Activated T-helper 1 cell treated with anti-CD3 and anti-CD28 coated beads, Interleukin-12 subunit alpha, Interleukin-12 subunit beta, Interleukin-2, Interleukin-4 antibody, amounts not matched to agents 30 ng/mL and 10 ng/mL and 1 ng/mL, durations not matched to agents 14 hours and 24 hours and 36 hours (primary cell): ENCODE measurements at regions of chr7 and their contacts with region 1.

Region 1: GRCh38 chr7:42886129-42886528 is 25.7 kb downstream of the C7orf25 start:
- DNase-seq: no peak
- H3K4me3 Mint-ChIP-seq: no peak overlapping the region
- H3K27ac Mint-ChIP-seq: no peak overlapping the region
- H3K4me1 Mint-ChIP-seq: peaks cover 25% of the 10 kb centered on the region
- H3K27me3 Mint-ChIP-seq: peaks cover 7% of the 10 kb centered on the region

Region 2: DNA sequence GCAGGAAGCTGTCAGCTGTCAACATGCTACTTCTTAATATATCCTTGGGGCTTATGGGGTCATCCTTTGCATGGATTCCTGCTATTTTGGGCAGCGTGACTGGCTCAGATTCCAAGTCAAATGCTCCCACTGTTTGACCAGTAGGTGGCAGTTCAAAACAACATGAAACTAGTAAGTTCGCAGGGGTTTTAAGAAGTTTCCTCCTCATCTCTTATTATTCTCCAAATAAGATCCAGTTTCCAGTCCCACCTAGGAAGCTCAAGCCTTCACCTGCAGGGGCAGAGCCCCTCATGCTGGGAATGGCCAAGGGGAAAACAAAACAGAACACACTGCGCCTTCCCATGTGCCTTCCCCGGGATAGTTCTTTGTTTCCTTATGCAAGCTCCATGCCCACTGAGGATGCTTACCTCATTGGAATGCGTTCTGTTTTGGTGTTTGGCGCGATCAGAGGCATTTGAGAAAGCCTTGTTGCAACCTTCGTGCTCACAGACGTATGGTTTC is 908.9 kb before region 1 on chr7:
- intact Hi-C with region 1: loop called (anchors 5 kb)
- DNase-seq: no peak
- H3K4me3 Mint-ChIP-seq: no peak overlapping the region
- H3K27ac Mint-ChIP-seq: no peak overlapping the region
- H3K4me1 Mint-ChIP-seq: no peaks in the 10 kb centered on the region
- H3K27me3 Mint-ChIP-seq: peaks cover 9% of the 10 kb centered on the region

Region 3: GRCh38 chr7:42014625-42015546 is 871.2 kb before region 1 on chr7:
- intact Hi-C with region 1: loop called (anchors 2 kb)
- DNase-seq: no peak
- H3K4me3 Mint-ChIP-seq: no peak overlapping the region
- H3K27ac Mint-ChIP-seq: no peak overlapping the region
- H3K4me1 Mint-ChIP-seq: no peaks in the 10 kb centered on the region
- H3K27me3 Mint-ChIP-seq: peaks cover 2% of the 10 kb centered on the region

Region 4: GRCh38 chr7:42911454-42912447 is 25.6 kb after region 1 on chr7 and contains the start of gene C7orf25:
- intact Hi-C with region 1: loop called (anchors 1 kb)
- DNase-seq: peak; percentile 93
- H3K4me3 Mint-ChIP-seq: peak within 1 kb of the TSS; percentile 90
- H3K27ac Mint-ChIP-seq: peak within 1 kb of the TSS; percentile 80
- H3K4me1 Mint-ChIP-seq: peaks cover 86% of the 10 kb centered on the region
- H3K27me3 Mint-ChIP-seq: no peaks in the 10 kb centered on the region
- total RNA-seq, gene C7orf25: 5.7 and 6.1 TPM in 2 replicates